Mammary epithelial cell (primary cell): ENCODE measurements at regions of chr13 and their contacts with region 1.

Region 1: DNA sequence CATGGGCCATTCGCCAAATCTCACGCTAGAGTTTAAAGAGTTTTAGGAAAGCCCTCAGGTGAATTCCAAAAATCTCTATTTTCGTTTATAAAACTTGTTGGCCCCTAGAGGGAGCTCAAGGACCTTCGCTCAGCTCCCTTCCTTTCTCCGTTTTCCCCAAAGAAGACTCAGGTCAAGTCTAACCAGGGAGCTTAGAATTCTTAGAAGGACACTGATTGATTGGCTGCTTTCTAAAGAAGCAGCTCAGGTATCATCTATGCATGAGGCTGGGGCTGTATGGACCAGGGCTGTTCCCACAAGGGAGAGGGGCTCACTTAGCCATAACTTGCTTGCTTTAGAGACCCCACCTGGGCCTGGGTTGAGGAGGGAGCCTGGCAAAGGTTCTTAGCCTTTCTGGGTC is 20.5 kb downstream of the DZIP1 start:
- DNase-seq: peak; percentile 40
- H3K4me3 ChIP-seq: no peak overlapping the region
- H3K27ac ChIP-seq: no peak overlapping the region
- H3K4me1 ChIP-seq: no peaks in the 10 kb centered on the region
- H3K27me3 ChIP-seq: no peaks in the 10 kb centered on the region
- CTCF ChIP-seq: peak; percentile 41 to 69

Region 2: GRCh38 chr13:95723438-95723837 is 99.4 kb after region 1 on chr13:
- CTCF ChIA-PET with region 1: no interaction called
- dilution Hi-C with region 1: no loop called
- in situ Hi-C with region 1: no loop called
- intact Hi-C with region 1: no loop called
- DNase-seq: no peak
- H3K4me3 ChIP-seq: no peak overlapping the region
- H3K27ac ChIP-seq: no peak overlapping the region
- H3K4me1 ChIP-seq: no peaks in the 10 kb centered on the region
- H3K27me3 ChIP-seq: no peaks in the 10 kb centered on the region
- CTCF ChIP-seq: no peak

Region 3: GRCh38 chr13:95982144-95982543 is 358.1 kb after region 1 on chr13:
- CTCF ChIA-PET with region 1: no interaction called
- dilution Hi-C with region 1: no loop called
- in situ Hi-C with region 1: no loop called
- intact Hi-C with region 1: loop called (anchors 1 kb)
- DNase-seq: no peak
- H3K4me3 ChIP-seq: no peak overlapping the region
- H3K27ac ChIP-seq: no peak overlapping the region
- H3K4me1 ChIP-seq: no peaks in the 10 kb centered on the region
- H3K27me3 ChIP-seq: no peaks in the 10 kb centered on the region
- CTCF ChIP-seq: no peak